ENCODE measurements at regions of chr7 and their contacts with region 1.

Region 1: DNA sequence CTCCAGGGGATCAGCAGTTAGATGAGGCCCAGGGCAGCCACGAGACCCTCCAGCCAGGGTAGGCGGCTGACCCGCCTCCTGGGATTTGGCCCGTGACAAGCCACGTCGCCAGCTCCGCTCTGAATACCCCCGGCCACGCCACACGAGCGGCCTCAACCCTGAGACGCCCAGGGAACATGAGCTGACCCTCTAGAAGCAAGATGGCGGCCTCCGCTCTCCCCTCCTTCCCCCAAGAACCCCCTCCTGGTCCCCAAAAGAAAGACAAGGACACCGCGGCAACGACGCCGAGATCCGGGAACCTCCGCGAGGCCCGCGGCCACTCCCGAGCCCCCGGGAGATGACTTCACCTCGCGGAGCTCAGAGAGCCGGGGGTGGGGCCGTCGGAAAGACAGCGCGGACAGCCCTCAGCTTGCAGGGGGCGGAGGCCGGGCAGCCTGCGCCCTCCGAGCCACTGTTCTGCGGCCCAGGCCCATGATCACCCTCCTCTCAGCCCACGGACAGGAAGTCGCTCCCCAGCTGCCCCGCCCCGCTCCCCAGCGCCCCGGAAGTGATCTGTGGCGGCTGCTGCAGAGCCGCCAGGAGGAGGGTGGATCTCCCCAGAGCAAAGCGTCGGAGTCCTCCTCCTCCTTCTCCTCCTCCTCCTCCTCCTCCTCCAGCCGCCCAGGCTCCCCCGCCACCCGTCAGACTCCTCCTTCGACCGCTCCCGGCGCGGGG is at the start of gene RALA:
- DNase-seq: peak; percentile 93 to 96 (median 95)
- ATAC-seq: peak; percentile 98 to 100 (median 99)
- H3K4me3 ChIP-seq: peak within 1 kb of the TSS; percentile 67 to 94 (median 89)
- H3K27ac ChIP-seq: peak within 1 kb of the TSS; percentile 80 to 96 (median 92)
- H3K4me1 ChIP-seq: peaks cover 6 to 56% (median 38%) of the 10 kb centered on the region in 12 donors
- H3K27me3 ChIP-seq: no peaks in the 10 kb centered on the region
- CTCF ChIP-seq: peak in 3 of 12 donors; percentile 4 to 21 (median 6)
- POLR2A ChIP-seq: peak in 1 of 2 donors; percentile 82
- total RNA-seq, gene RALA: 13.5 to 37.1 (median 23.4) TPM

Region 2: GRCh38 chr7:39566023-39566921 is 56.9 kb before region 1 on chr7 and contains the start of gene YAE1:
- intact Hi-C with region 1: no loop called
- DNase-seq: peak; percentile 84 to 92 (median 87)
- ATAC-seq: peak; percentile 96 to 100 (median 99)
- H3K4me3 ChIP-seq: peak within 1 kb of the TSS; percentile 59 to 89 (median 80)
- H3K27ac ChIP-seq: peak within 1 kb of the TSS in 11 of 12 donors; percentile 62 to 88 (median 82)
- H3K4me1 ChIP-seq: peaks cover 5 to 19% (median 12%) of the 10 kb centered on the region in 12 donors
- H3K27me3 ChIP-seq: no peaks in the 10 kb centered on the region
- CTCF ChIP-seq: no peak
- POLR2A ChIP-seq: peak; percentile 11 to 70
- total RNA-seq, gene YAE1: 8.4 to 19.5 (median 16.1) TPM

Region 3: DNA sequence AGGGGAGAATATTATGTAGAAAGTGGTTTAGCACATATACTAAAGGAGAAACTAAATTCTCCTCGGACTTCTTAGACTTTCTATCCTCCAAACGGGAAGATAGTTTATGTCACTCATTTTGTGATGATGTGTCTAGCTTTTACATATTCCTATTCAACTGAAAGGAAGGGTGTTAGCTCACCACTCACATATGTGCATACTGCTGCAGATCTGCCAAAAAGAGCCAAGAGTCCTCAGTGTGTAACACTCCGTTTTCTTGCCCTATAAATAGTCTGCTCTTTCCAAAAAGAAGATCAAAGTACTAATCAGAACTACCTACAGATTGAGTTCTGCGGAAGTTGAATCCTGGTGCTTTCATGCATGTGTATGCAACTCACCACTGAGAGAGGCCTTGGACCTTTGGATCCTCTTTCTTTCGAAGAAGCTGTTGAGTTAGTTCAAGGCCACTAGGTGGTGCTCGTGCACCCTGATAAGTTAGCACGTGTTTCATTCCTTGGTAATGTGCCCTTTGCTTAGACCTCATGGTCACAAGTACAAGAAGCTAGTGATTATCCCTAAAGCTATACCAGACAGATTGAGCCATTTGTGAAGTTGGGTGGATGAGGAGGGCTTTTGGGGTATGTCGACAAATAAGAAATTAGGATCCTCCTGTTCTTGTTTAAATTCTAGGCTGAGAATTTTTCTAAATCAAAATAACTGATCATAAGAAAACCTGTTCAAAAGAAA is 42.9 kb before region 1 on chr7:
- intact Hi-C with region 1: loop called in 2 of 10 experiments (anchors 2 to 5 kb)
- DNase-seq: peak; percentile 67 to 84 (median 75)
- ATAC-seq: peak; percentile 74 to 95 (median 92)
- H3K4me3 ChIP-seq: no peak overlapping the region
- H3K27ac ChIP-seq: no peak overlapping the region
- H3K4me1 ChIP-seq: peaks cover 0 to 4% (median 0%) of the 10 kb centered on the region in 12 donors
- H3K27me3 ChIP-seq: no peaks in the 10 kb centered on the region
- CTCF ChIP-seq: peak; percentile 79 to 92 (median 86)
- POLR2A ChIP-seq: no peak

Region 4: DNA sequence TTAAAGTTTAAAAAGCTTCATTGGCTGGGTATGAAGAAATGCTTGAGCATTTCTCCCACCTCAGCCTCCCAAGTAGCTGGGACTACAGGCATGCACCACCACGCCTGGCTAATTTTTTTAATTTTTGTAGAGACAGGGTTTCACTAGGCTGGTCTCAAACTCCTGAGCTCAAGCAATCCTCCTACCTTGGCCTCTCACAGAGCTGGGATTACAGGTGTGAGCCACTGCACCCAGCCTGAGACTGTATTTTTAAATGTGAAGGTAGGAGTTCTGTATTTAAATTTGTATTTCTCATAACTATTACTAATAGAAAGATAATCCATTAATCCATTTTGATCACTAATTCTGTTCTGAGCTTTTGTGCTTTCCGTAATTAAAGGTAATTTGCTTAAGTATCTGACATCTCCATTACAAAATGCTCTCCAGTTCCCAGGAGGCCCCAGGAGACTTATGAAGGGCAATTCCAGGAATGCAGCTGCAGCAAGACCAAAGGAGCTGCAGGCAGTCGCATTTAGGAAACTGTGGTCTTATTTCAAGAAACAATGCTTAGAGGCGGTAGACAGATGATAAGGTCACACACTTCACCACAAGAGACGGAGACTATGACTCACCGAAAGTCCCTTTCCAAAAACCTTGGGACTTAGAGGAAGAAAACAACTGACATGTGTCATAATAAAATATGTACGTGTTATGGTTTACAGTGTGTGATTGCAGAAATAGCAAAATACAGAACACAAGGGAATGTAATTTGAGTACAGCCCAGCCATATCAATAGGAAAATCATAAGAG is 33.7 kb before region 1 on chr7:
- intact Hi-C with region 1: loop called in 2 of 10 experiments (anchors 2 to 5 kb)
- DNase-seq: peak in 2 of 5 donors; percentile 25 to 47
- ATAC-seq: peak in 3 of 4 donors; percentile 85 to 93 (median 89)
- H3K4me3 ChIP-seq: no peak overlapping the region
- H3K27ac ChIP-seq: peak overlapping the region in 2 of 12 donors; percentile 15 to 22
- H3K4me1 ChIP-seq: peaks cover 0 to 28% (median 11%) of the 10 kb centered on the region in 12 donors
- H3K27me3 ChIP-seq: no peaks in the 10 kb centered on the region
- CTCF ChIP-seq: no peak
- POLR2A ChIP-seq: no peak

Region 5: DNA sequence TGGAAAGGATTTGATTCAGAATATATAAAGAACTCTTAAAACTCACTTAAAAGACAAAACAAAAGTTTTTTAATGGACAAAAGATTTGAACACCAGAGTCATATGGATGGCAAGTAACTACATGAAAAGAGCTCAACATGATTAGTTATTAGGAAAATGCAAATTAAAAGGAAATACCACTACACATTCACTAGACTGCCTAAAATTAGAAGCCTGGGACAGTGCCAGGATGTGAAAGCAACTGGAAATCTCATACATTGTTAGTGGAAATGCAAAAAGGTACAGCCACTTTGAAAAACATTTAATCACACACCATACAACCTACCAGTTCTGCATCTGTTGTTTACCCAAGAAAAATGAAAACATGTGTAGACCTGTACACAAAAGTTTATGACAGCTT is 49.0 kb after region 1 on chr7:
- intact Hi-C with region 1: loop called in 3 of 10 experiments (anchors 5 to 10 kb)
- DNase-seq: peak in 1 of 5 donors; percentile 25
- ATAC-seq: no peak
- H3K4me3 ChIP-seq: no peak overlapping the region
- H3K27ac ChIP-seq: peak overlapping the region in 1 of 12 donors; percentile 2
- H3K4me1 ChIP-seq: peaks cover 0 to 58% (median 27%) of the 10 kb centered on the region in 12 donors
- H3K27me3 ChIP-seq: no peaks in the 10 kb centered on the region
- CTCF ChIP-seq: no peak
- POLR2A ChIP-seq: no peak

Region 6: GRCh38 chr7:39686261-39686924 is 63.2 kb after region 1 on chr7:
- intact Hi-C with region 1: loop called in 2 of 10 experiments (anchors 5 to 10 kb)
- DNase-seq: no peak
- ATAC-seq: no peak
- H3K4me3 ChIP-seq: no peak overlapping the region
- H3K27ac ChIP-seq: no peak overlapping the region
- H3K4me1 ChIP-seq: peaks cover 3 to 33% (median 27%) of the 10 kb centered on the region in 12 donors
- H3K27me3 ChIP-seq: no peaks in the 10 kb centered on the region
- CTCF ChIP-seq: no peak
- POLR2A ChIP-seq: no peak

Region 7: DNA sequence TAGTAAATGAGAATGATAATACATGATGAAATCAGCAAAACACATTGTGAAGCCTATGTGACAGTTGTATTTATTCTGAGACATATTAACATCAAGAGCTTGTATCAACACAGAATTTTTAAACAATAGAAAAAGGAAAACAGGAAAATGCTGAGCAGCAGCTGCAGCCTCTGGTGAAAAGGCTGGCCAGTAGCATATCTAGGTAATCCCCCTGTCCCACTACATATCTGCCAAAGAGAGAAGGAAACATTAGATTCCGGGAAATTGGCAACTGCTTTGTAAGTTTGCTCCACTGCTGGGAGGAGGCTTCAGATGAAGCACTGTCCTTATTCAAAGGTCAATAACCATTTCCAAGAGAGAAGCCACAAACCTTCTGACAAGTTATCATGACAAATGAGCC is 89.6 kb after region 1 on chr7:
- intact Hi-C with region 1: no loop called
- DNase-seq: no peak
- ATAC-seq: no peak
- H3K4me3 ChIP-seq: no peak overlapping the region
- H3K27ac ChIP-seq: no peak overlapping the region
- H3K4me1 ChIP-seq: peaks cover 0 to 14% (median 2%) of the 10 kb centered on the region in 12 donors
- H3K27me3 ChIP-seq: no peaks in the 10 kb centered on the region
- CTCF ChIP-seq: no peak
- POLR2A ChIP-seq: no peak

Region 8: DNA sequence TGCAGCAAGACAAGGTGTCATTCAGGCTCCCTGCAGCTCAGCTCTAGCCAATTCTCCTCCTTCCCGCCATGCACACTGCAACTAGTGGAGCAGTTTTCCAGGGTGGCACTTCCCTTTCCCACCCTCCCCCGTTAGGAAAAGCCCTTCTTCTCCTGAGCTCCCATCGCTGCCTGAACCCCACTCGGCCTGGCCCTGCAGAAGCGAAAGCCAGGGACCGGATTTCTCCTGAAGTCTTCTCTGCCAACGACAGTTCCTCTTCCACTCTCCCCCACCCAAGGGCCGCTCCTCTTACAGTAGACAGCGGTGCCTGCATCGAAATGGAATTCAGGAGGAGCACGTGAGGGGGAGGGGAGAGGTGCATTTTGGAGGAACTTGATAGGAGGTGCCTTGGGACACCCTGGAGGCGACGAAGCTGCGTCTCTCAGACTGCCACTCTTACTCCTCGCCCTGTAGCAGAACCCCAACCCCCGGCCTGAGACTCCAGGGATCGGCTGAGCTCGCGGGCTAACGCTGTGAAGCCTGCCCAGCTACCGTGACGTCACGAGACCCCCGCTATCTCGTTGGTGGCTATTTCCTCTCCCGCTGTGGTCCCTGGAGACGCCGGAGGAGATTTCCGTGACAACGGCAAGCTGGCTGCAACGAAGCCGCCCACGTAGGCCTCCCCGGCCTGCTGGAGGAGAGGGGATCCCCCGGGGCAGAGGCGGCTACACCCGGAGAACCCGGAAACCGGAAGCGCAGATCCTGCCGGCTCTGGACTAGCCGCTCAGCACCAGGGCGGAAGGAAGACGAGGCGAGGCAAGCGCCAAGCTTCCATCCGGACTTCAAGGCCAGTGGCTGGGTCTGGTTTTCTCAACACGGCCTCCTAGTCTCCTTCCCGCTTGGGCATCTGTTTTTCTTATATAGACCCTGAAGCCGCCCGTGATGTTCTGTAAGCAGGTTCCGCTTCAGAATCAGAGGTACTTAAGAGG is 109.9 kb after region 1 on chr7:
- intact Hi-C with region 1: loop called in 4 of 10 experiments (anchors 2 to 5 kb)
- DNase-seq: peak; percentile 97 to 98 (median 98)
- ATAC-seq: peak; percentile 95 to 98 (median 97)
- H3K4me3 ChIP-seq: peak overlapping the region; percentile 8 to 72 (median 60)
- H3K27ac ChIP-seq: peak overlapping the region in 11 of 12 donors; percentile 41 to 90 (median 76)
- H3K4me1 ChIP-seq: peaks cover 0 to 40% (median 21%) of the 10 kb centered on the region in 12 donors
- H3K27me3 ChIP-seq: no peaks in the 10 kb centered on the region
- CTCF ChIP-seq: no peak
- POLR2A ChIP-seq: peak in 1 of 2 donors; percentile 13

Region 9: GRCh38 chr7:39746103-39746819 is 123.1 kb after region 1 on chr7:
- intact Hi-C with region 1: loop called in 1 of 10 experiments (anchors 5 kb)
- DNase-seq: peak; percentile 74 to 80 (median 78)
- ATAC-seq: peak; percentile 58 to 92 (median 84)
- H3K4me3 ChIP-seq: no peak overlapping the region
- H3K27ac ChIP-seq: no peak overlapping the region
- H3K4me1 ChIP-seq: peaks cover 0 to 8% (median 0%) of the 10 kb centered on the region in 12 donors
- H3K27me3 ChIP-seq: no peaks in the 10 kb centered on the region
- CTCF ChIP-seq: peak; percentile 67 to 89 (median 80)
- POLR2A ChIP-seq: no peak